PC-3 (cell line): ENCODE measurements at regions of chr15 and their contacts with region 1.

Region 1: GRCh38 chr15:41066516-41066915 is 49.6 kb downstream of the INO80 start:
- DNase-seq: no peak
- ATAC-seq: no peak
- H3K4me3 ChIP-seq: no peak overlapping the region
- H3K27ac ChIP-seq: no peak overlapping the region
- H3K4me1 ChIP-seq: no peaks in the 10 kb centered on the region
- H3K27me3 ChIP-seq: no peaks in the 10 kb centered on the region
- CTCF ChIP-seq: no peak

Region 2: GRCh38 chr15:41104234-41104633 is 37.7 kb after region 1 on chr15:
- CTCF ChIA-PET with region 1: interaction called, 10 read pairs
- POLR2A ChIA-PET with region 1: no interaction called
- intact Hi-C with region 1: no loop called
- DNase-seq: peak; percentile 78
- ATAC-seq: peak; percentile 99
- H3K4me3 ChIP-seq: no peak overlapping the region
- H3K27ac ChIP-seq: peak overlapping the region; percentile 38
- H3K4me1 ChIP-seq: peaks cover 32% of the 10 kb centered on the region
- H3K27me3 ChIP-seq: no peaks in the 10 kb centered on the region
- CTCF ChIP-seq: no peak